MCF 10A (cell line): ENCODE measurements at regions of chr2 and their contacts with region 1.

Region 1: GRCh38 chr2:239625971-239626734 is 225.3 kb upstream of the HDAC4 start:
- DNase-seq: no peak
- H3K4me3 Mint-ChIP-seq: no peak overlapping the region
- H3K27ac Mint-ChIP-seq: no peak overlapping the region
- H3K4me1 Mint-ChIP-seq: peaks cover 7% of the 10 kb centered on the region
- H3K27me3 Mint-ChIP-seq: peaks cover 27% of the 10 kb centered on the region
- CTCF ChIP-seq: no peak

Region 2: DNA sequence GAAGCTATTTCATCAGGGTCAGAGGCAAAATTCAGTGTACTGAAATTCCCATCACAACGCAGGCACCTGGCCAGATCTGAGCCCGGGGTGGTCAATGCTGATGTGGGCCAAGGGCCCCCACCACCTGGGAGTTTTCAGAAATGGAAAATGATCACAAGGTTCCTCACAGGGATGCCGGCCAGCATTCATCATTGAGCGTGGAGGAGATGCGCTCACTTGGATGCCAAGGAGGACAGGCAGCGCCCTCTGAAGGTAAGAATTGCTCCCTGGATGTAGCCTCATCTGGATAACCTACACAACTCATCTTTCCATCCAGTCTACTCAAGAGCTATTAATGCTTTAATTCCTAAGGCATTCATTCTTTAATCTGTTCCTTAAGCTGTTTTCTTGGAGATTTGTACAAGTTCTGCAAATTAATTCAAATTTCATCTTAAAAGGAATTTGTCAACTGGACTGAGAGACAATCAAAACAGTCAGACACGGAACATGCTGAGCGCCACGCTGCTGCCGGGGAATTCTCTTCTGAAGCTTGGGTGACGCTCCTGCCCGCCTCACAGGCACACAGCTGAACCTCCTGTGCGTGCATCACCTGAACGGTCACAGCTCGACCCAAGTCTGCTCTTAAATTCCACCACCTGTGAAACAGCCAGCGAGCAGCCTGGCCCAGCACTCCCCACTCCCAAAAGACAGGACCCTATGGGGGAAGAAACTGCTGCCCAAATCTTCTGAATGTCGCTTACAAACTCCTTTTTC is 432.1 kb before region 1 on chr2:
- CTCF ChIA-PET with region 1: interaction called, 11 read pairs
- POLR2A ChIA-PET with region 1: no interaction called
- intact Hi-C with region 1: no loop called
- DNase-seq: no peak
- H3K4me3 Mint-ChIP-seq: no peak overlapping the region
- H3K27ac Mint-ChIP-seq: no peak overlapping the region
- H3K4me1 Mint-ChIP-seq: no peaks in the 10 kb centered on the region
- H3K27me3 Mint-ChIP-seq: no peaks in the 10 kb centered on the region
- CTCF ChIP-seq: no peak

Region 3: DNA sequence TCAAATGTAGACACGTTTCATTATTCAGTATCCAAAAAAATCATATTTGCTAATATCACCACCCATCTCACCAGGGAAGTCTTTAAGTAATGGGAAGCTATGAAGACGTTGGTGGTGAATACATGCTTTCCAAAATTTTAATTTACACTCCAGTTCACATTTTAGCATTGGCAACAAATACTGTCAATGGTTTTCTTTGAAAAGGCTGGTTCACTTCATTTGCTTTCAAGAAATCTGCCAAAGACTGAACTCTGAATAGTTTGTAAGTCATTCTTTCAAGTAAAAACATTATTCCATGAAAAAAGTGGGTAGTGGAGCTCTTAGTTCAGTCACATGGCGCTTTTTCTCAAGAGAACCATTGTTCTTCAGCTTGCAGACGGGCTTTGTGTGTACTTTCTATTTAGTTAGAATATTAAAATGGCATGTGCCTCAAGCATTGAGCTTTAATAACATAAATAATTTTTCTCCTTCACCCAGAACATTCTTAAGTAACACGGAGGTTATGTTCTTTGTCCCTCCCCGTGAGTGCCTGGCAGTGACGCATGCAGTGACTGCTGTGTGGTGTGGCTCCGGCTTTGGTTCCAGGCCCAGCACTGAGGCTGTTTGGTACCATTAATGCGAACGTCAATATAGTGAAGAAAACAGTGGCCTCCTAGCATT is 74.7 kb after region 1 on chr2:
- CTCF ChIA-PET with region 1: no interaction called
- POLR2A ChIA-PET with region 1: no interaction called
- intact Hi-C with region 1: no loop called
- DNase-seq: no peak
- H3K4me3 Mint-ChIP-seq: no peak overlapping the region
- H3K27ac Mint-ChIP-seq: no peak overlapping the region
- H3K4me1 Mint-ChIP-seq: no peaks in the 10 kb centered on the region
- H3K27me3 Mint-ChIP-seq: peaks cover 30% of the 10 kb centered on the region
- CTCF ChIP-seq: no peak

Region 4: DNA sequence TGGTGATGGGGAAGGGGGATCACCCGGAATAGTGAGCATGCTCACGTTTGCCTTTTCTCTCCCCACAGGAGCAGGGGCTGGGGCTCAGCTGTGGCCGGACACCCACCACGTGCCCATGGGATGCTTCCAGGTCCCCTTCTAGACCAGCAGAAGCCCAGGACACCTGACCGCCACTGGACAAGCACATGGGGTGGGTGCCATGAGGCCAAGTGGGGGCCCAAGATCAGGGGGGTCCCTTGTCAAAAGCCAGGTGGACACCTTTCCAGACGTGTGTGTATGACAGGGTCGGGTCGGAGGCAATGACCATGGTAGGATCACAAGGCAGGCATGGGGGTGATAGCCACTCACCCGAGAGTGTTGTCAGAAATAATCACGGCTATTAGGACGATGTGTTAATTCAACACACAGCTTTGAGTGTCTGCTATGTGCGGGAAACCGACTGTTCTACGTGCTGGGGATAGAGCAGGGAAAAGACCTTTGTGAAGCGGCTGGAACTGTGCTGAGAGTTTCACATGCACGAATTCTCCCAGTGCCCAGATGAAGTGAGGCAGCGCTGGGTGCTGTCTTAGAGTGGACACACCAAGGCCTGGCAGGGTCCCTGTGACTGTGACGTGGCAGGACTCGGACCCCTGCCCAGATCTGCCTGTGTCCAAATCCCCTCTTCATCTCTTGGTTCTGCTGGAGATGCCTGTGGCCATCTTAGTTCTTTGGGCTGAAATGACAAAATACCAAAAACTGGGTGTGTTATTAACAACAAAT is 154.3 kb after region 1 on chr2:
- CTCF ChIA-PET with region 1: no interaction called
- POLR2A ChIA-PET with region 1: no interaction called
- intact Hi-C with region 1: no loop called
- DNase-seq: no peak
- H3K4me3 Mint-ChIP-seq: no peak overlapping the region
- H3K27ac Mint-ChIP-seq: no peak overlapping the region
- H3K4me1 Mint-ChIP-seq: no peaks in the 10 kb centered on the region
- H3K27me3 Mint-ChIP-seq: peaks cover 67% of the 10 kb centered on the region
- CTCF ChIP-seq: no peak